Mammary epithelial cell (primary cell): ENCODE measurements at regions of chr17 and their contacts with region 1.

Region 1: DNA sequence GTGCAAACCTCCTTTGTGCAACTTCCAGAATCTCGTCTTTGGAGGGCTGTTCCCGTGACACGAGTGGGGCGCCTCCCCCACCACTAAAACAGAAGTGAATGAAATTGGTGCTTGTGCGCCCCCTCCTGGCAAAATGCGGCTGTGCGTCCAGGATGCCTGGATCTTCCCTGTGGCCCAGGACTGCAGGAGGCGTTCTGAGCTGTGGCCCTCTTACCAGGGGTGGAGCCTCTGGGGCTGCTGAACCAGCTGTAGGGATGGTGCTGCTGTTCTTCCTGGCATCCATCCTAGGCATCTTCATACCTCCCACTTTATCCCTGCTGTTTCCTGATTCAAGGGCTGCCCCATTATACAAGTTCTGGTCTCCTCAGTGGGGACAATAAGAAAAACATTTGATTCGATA is 18.5 kb upstream of the NAGLU start:
- DNase-seq: peak; percentile 75
- H3K4me3 ChIP-seq: no peak overlapping the region
- H3K27ac ChIP-seq: no peak overlapping the region
- H3K4me1 ChIP-seq: peaks cover 44% of the 10 kb centered on the region
- H3K27me3 ChIP-seq: no peaks in the 10 kb centered on the region
- CTCF ChIP-seq: peak; percentile 92 to 98

Region 2: DNA sequence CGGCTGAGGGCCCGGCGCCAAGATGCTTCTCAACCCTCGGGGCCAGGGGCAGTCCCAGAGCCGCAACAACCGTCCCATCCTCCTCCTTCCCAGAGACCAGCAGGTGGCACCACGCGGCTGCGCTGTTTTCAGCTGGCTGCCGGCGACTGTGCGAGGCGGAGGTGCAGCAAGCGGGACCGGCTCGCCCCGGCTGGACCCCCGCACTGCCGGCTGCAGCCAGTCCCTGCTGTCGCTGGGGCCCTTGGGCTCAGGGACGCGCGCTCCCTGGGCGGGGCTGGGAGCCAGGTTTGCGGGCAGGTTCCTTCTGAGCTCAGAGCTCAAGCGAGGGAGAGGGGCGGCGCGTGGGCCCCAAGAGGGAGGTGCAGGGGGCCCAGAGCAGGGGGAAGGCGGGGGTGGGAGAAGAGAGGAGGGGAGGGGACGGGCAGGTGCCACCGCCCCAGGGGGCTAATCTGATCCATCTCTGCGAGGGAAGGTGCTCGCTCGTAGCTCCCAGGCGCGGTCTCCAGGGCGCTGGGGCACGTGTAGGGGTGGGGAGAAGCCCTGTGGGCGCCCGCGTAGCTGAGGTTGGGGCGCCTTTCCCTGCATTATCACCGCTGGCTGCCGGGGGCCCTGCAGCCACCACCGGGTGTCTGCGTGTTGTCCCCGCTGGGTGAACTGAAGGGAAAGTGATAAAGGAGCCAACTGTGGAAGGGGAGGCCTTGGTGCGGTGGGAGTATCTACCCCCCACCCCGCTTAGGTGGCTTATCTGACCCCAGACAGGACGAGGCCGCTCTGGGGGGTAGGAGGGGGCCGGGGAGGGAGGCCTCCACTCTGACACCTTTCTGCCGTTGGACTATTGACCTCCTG is 205.0 kb before region 1 on chr17:
- CTCF ChIA-PET with region 1: no interaction called
- dilution Hi-C with region 1: loop called (anchors 5 kb)
- in situ Hi-C with region 1: no loop called
- intact Hi-C with region 1: no loop called
- DNase-seq: peak; percentile 48
- H3K4me3 ChIP-seq: no peak overlapping the region
- H3K27ac ChIP-seq: no peak overlapping the region
- H3K4me1 ChIP-seq: peaks cover 13% of the 10 kb centered on the region
- H3K27me3 ChIP-seq: no peaks in the 10 kb centered on the region
- CTCF ChIP-seq: peak; percentile 40 to 78

Region 3: GRCh38 chr17:42388381-42389134 is 129.0 kb before region 1 on chr17 and contains the start of gene STAT3:
- CTCF ChIA-PET with region 1: interaction called, 10 read pairs
- dilution Hi-C with region 1: no loop called
- in situ Hi-C with region 1: no loop called
- intact Hi-C with region 1: loop called (anchors 5 kb)
- DNase-seq: peak; percentile 100
- H3K4me3 ChIP-seq: peak within 1 kb of the TSS; percentile 70 to 85 (median 78)
- H3K27ac ChIP-seq: peak within 1 kb of the TSS; percentile 69
- H3K4me1 ChIP-seq: peaks cover 16% of the 10 kb centered on the region
- H3K27me3 ChIP-seq: no peaks in the 10 kb centered on the region
- CTCF ChIP-seq: no peak
- total RNA-seq, gene STAT3: 94.3 to 191 TPM

Region 4: DNA sequence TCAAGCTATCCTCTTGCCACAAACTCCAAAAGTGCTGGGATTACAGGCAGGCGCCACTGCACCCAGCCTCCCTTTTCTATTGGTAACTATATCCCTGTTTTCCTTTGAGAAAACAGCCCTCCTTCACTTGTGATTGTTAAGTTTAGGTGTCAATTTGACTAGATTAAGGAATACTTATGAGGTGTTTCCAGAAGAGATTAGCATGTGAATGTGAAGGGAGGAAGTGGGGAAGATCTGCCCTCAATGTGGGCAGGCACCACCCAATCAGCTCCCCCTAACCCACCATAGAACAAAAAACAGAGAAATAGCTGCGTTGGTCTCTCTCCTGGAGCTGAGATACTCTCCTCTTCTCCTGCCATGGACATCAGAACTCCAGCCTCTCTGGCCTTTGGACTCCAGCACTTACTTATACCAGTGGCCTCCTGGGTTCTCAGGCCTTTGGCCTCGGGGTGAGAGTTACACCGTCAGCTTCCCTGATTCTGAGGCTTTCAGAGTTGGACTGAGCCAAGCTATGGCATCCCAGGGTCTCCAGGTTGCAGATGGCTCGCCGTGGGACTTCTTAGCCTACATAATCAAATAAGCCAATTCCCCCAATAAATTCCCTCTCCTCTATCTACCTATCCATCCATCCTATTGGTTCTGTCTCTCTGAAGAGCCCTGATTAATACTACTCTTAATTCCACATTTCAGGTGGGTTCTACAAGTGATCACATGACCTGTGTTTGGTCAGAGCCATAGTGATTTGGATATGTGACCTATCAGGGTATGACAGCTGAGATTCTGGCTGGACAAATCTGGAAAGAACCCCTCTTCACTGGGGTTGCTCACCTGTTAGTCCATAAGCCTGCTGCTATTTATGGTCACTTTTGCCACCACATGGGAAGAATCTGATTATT is 117.3 kb before region 1 on chr17:
- CTCF ChIA-PET with region 1: no interaction called
- dilution Hi-C with region 1: no loop called
- in situ Hi-C with region 1: no loop called
- intact Hi-C with region 1: no loop called
- DNase-seq: no peak
- H3K4me3 ChIP-seq: no peak overlapping the region
- H3K27ac ChIP-seq: no peak overlapping the region
- H3K4me1 ChIP-seq: peaks cover 4% of the 10 kb centered on the region
- H3K27me3 ChIP-seq: no peaks in the 10 kb centered on the region
- CTCF ChIP-seq: no peak

Region 5: GRCh38 chr17:42422958-42423712 is 94.4 kb before region 1 on chr17 and contains the start of gene CAVIN1:
- CTCF ChIA-PET with region 1: no interaction called
- dilution Hi-C with region 1: loop called (anchors 5 kb)
- in situ Hi-C with region 1: no loop called
- intact Hi-C with region 1: loop called (anchors 1 kb)
- DNase-seq: peak; percentile 98
- H3K4me3 ChIP-seq: peak within 1 kb of the TSS; percentile 76 to 92 (median 90)
- H3K27ac ChIP-seq: peak within 1 kb of the TSS; percentile 69
- H3K4me1 ChIP-seq: peaks cover 22% of the 10 kb centered on the region
- H3K27me3 ChIP-seq: no peaks in the 10 kb centered on the region
- CTCF ChIP-seq: no peak
- total RNA-seq, gene CAVIN1: 354 to 592 TPM

Region 6: DNA sequence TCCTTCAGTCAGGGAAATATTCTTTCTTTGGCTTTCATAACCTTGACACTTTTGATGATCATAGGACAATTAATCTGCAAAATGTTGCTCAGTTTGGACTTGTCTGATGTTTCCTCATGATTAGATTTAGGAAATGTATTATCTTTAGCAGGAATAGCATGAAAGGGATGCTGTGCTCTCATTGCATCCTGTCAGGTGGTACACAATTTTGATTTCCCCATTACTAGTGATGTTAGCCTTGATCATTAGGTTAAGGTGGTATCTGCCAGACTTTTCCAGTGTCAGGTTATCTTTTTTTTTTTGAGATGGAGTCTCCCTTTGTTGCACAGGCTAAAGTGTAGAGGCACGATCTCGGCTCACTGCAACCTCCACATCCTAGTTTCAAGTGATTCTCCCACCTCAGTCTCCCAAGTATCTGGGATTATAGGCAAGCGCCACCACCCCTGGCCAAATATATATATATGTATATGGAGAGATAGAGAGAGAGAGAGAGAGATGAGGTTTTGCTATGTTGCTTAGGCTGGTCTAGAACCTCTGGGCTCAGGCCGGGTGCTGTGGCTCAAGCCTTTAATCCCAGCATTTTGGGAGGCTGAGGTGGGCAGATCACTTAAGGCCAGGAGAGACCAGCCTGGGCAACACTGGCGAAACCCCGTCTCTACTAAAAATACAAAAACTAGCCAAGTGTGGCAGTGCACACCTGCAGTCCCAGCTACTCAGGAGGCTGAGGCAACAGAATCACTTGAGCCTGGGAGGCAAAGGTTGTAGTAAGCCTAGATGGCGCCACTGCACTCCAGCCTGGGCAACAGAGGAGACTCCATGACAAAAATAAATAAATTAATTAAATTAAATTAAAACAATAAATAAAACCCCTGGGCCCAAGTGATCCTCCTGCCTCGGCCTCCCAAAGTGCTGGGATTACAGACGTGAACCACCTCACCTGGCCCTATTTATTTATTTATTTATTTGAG is 78.6 kb before region 1 on chr17:
- CTCF ChIA-PET with region 1: no interaction called
- dilution Hi-C with region 1: no loop called
- in situ Hi-C with region 1: no loop called
- intact Hi-C with region 1: loop called (anchors 1 kb)
- DNase-seq: no peak
- H3K4me3 ChIP-seq: no peak overlapping the region
- H3K27ac ChIP-seq: no peak overlapping the region
- H3K4me1 ChIP-seq: peaks cover 7% of the 10 kb centered on the region
- H3K27me3 ChIP-seq: no peaks in the 10 kb centered on the region
- CTCF ChIP-seq: peak in 1 of 2 donors; percentile 56